ENCODE measurements at regions of chr16 and their contacts with region 1.

Region 1: GRCh38 chr16:3873482-3874173 is 6.9 kb downstream of the CREBBP start:
- DNase-seq: no peak
- ATAC-seq: peak; percentile 9

Region 2: GRCh38 chr16:3819746-3820724 is 53.6 kb before region 1 on chr16:
- intact Hi-C with region 1: loop called (anchors 5 kb)
- DNase-seq: no peak
- ATAC-seq: peak; percentile 79

Region 3: DNA sequence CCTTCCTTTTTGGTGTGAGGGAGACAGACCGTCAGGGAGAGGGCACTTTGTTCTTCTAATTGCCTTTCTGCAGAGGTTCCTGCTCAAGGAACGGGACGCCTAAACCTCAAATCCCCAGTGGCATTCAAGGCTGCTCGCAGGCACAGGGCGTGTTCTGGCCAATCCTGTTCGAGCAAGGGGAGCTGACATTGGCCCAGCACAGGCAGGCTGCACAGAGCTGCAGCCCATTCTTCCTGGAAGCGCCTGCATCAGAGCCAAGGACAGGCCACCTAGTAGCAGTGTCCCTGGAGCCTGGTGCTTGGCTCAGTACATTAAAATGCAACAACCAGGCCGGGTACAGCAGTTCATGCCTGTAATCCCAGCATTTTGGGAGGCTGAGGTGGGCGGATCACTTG is 79.1 kb after region 1 on chr16:
- intact Hi-C with region 1: no loop called
- DNase-seq: peak; percentile 92
- ATAC-seq: peak; percentile 87

Region 4: GRCh38 chr16:4307215-4308037 is 433.8 kb after region 1 on chr16:
- intact Hi-C with region 1: no loop called
- DNase-seq: peak; percentile 98
- ATAC-seq: peak; percentile 98

Measured in Right ventricle myocardium superior (tissue), 1 donor.